GM12878 (cell line): ENCODE measurements at regions of chr7 and their contacts with region 1.

Region 1: GRCh38 chr7:85186521-85187241 is at the start of gene SEMA3D:
- DNase-seq: no peak
- ATAC-seq: peak; percentile 99
- H3K4me3 ChIP-seq: peak within 1 kb of the TSS; percentile 22; the same call in 1 of the 2 replicates
- H3K27ac ChIP-seq: no peak within 1 kb of the TSS
- H3K4me1 ChIP-seq: no peaks in the 10 kb centered on the region
- H3K27me3 ChIP-seq: peaks cover 12 to 25% of the 10 kb centered on the region in 2 experiments
- CTCF ChIP-seq: peak; percentile 61 to 75 (median 70)
- EP300 ChIP-seq: no peak
- POLR2A ChIP-seq: no peak
- RAD21 ChIP-seq: peak; percentile 57
- polyA plus RNA-seq, gene SEMA3D: 0.04 TPM in 1 of 2 experiments, not detected in the other

Region 2: GRCh38 chr7:85237721-85238120 is 51.0 kb after region 1 on chr7:
- CTCF ChIA-PET with region 1: no interaction called
- POLR2A ChIA-PET with region 1: no interaction called
- RAD21 ChIA-PET with region 1: no interaction called
- SMC1A ChIA-PET with region 1: no interaction called
- in situ Hi-C with region 1: no loop called
- intact Hi-C with region 1: no loop called
- DNase-seq: no peak
- ATAC-seq: no peak
- H3K4me3 ChIP-seq: no peak overlapping the region
- H3K27ac ChIP-seq: no peak overlapping the region
- H3K4me1 ChIP-seq: no peaks in the 10 kb centered on the region
- H3K27me3 ChIP-seq: no peaks in the 10 kb centered on the region
- CTCF ChIP-seq: no peak
- EP300 ChIP-seq: no peak
- POLR2A ChIP-seq: no peak
- RAD21 ChIP-seq: no peak

Region 3: DNA sequence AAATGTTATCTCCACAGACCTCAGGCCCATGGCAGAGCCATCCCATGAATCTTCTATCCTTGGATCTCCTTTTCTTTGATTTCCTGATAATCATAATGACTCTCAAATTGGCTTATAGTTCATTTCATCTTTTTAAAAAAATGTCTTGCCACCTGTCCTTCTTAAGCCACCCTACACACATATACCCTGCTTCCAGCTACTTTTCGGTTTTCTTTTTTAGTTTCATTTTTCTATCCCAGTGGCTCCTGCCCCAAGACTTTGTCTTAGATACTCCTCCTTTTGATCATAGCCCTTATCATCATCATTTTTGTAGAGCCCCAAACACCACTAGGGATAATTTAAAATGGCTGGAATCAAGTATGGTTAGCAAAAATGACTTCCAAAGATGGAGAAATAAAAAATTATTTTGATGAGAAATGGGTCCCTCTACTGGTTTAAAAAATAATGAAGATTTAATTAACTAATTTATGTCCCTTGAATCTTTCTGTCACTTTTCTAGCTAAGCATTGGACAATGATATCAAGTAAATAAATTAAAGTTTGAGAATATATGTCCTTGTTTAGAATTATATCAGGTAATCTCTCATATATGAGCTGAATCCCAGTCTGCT is 277.5 kb after region 1 on chr7:
- CTCF ChIA-PET with region 1: interaction called, 9 read pairs
- POLR2A ChIA-PET with region 1: no interaction called
- RAD21 ChIA-PET with region 1: no interaction called
- SMC1A ChIA-PET with region 1: no interaction called
- in situ Hi-C with region 1: no loop called
- intact Hi-C with region 1: loop called (anchors 10 kb)
- DNase-seq: no peak
- ATAC-seq: no peak
- H3K4me3 ChIP-seq: no peak overlapping the region
- H3K27ac ChIP-seq: no peak overlapping the region
- H3K4me1 ChIP-seq: no peaks in the 10 kb centered on the region
- H3K27me3 ChIP-seq: no peaks in the 10 kb centered on the region
- CTCF ChIP-seq: no peak; a peak in 1 of 6 replicates
- EP300 ChIP-seq: no peak
- POLR2A ChIP-seq: no peak
- RAD21 ChIP-seq: no peak

Region 4: DNA sequence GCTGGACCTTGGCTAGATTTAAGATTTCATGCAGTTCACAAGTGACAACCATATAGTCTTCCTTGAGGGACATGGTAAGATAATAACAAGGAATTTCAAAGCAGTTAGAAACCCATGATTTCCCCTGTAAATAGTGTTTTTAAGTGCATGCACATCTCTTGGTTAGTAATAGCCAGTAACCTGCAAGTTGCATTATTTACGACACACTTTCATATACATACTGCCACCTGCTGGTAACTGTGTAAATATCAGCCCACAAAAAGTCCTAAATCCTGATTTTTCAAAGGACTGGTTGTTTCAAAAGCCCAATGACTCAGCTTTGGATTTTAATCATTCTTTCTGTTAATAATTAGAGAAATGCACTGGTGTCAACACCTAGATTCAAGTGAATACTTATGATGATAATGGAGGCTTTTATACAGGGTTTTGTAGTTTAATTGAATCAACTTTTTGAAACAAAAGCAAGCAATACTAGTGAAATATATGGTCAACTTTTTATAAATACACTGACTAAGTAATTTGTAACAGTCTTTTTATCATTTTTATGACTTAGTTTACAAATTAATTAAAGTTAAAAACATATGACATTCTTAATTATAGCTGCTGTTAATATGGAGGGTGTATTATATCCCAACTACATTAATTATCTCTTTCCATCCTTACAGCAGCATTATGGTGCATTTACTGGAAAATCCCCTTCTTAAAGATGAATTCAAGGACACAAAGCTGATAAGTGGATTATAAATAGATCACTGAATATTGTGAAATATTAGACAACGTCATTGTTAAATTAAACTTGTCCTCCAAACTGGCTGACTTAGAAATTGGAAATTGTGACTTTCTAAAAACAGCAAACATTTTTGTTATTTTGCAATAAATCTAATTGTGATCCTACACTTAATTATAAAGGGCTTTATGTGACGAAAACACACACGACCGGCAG is 367.8 kb after region 1 on chr7:
- CTCF ChIA-PET with region 1: interaction called, 6 read pairs
- POLR2A ChIA-PET with region 1: no interaction called
- RAD21 ChIA-PET with region 1: interaction called, 3 read pairs
- SMC1A ChIA-PET with region 1: no interaction called
- in situ Hi-C with region 1: no loop called
- intact Hi-C with region 1: loop called (anchors 5 kb)
- DNase-seq: no peak
- ATAC-seq: peak; percentile 74
- H3K4me3 ChIP-seq: no peak overlapping the region
- H3K27ac ChIP-seq: no peak overlapping the region
- H3K4me1 ChIP-seq: no peaks in the 10 kb centered on the region
- H3K27me3 ChIP-seq: no peaks in the 10 kb centered on the region
- CTCF ChIP-seq: peak; percentile 48 to 66 (median 66); a peak in 5 of 6 replicates
- EP300 ChIP-seq: no peak
- POLR2A ChIP-seq: no peak
- RAD21 ChIP-seq: peak; percentile 69